CD4-positive, alpha-beta memory T cell (primary cell): ENCODE measurements at regions of chr7 and their contacts with region 1.

Region 1: DNA sequence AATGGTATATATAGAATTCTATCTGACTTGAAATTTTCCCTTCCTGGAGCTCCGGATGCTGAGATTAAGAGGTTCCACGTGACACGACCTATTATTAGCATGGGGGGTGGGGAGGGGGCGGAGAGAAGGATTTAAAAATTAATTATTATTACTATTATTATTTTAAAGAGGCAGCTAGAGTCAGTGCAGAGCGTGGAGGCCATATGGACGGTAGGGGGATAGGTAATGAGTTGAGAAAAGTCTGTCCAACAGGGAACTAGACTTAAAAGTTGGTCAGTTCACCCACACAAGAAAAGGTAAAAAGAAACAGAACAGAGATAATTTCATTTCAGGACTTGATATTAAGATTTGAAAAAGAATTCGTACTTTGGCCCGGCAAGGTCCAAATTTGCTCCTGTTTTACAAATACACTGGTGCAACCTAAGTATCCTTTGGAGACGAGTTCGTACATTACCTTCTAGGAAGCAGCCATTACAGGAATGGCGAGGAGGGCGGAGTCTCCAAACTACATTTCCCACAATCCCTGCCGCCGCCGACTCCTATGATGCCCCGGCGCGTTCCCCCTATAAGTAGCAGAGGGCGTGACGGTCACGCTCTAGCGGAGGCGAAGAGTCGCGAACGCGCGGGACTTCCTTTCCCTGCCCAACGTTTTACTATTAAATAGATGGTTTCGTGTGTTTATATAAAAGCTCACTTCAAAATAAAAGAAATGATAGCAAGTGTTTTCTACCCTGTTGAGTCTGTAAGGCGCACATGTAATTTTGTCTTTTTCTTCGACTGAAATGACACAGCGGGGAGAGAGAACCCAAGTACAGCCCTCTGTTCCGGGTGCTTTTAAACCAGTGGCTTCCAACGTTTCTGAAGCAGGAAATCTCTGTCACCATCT is at the start of gene SMIM30:
- DNase-seq: peak; percentile 85 to 89 (median 87)
- H3K4me3 ChIP-seq: peak within 1 kb of the TSS; percentile 65 to 70
- H3K4me3 Mint-ChIP-seq: peak within 1 kb of the TSS; percentile 94 to 99 (median 96)
- H3K27ac ChIP-seq: peak within 1 kb of the TSS; percentile 70
- H3K27ac Mint-ChIP-seq: peak within 1 kb of the TSS; percentile 84 to 99 (median 98)
- H3K4me1 ChIP-seq: peaks cover 13% of the 10 kb centered on the region
- H3K4me1 Mint-ChIP-seq: peaks cover 11 to 24% (median 14%) of the 10 kb centered on the region in 4 donors
- H3K27me3 ChIP-seq: no peaks in the 10 kb centered on the region
- H3K27me3 Mint-ChIP-seq: no peaks in the 10 kb centered on the region
- total RNA-seq, gene SMIM30: 21.6 to 21.8 TPM

Region 2: DNA sequence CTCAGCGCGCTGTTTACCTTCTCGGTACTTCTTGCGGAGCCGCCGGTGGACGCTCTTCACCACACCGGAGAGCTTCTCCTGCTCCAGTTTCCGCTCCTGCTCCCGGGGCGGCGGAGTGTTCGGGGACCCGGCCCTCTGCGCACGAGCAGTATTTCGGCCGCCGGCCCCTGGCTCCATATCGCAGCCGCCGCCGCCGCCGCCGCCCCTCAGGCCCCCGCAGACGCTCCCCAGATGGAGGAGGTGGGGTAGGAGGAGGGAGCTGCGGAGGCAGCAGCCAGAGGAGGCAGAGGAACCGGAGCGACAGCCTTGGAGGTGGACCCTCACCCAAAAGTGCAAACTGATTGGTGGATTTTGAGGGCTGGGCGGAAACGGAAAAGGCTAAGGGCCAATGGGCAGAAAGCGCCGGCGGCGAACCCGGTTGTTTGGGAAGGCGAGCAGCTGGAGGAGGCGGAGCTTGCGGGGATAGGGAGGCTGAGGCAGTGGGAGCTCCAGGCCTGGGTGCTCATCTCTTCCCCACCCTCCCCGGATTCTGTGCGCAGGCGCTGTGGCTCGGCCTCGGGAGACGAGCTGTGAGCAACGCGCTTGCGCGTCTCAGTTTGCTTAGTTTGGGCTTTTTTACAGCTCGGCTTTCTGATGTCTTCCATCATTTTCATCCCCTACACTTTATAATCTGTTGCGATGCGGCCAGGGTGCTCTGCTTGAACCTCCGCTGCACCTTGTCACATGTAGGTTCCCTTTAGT is 178.6 kb before region 1 on chr7:
- CTCF ChIA-PET with region 1: interaction called, 4 read pairs
- POLR2A ChIA-PET with region 1: interaction called, 9 read pairs
- intact Hi-C with region 1: loop called (anchors 1 kb)
- DNase-seq: peak; percentile 99 to 100 (median 99)
- H3K4me3 ChIP-seq: peak overlapping the region; percentile 71 to 72
- H3K4me3 Mint-ChIP-seq: peak overlapping the region; percentile 92 to 99 (median 96)
- H3K27ac ChIP-seq: peak overlapping the region; percentile 71
- H3K27ac Mint-ChIP-seq: peak overlapping the region; percentile 90 to 99 (median 97)
- H3K4me1 ChIP-seq: peaks cover 40% of the 10 kb centered on the region
- H3K4me1 Mint-ChIP-seq: peaks cover 31 to 59% (median 43%) of the 10 kb centered on the region in 4 donors
- H3K27me3 ChIP-seq: no peaks in the 10 kb centered on the region
- H3K27me3 Mint-ChIP-seq: peaks cover 0 to 4% of the 10 kb centered on the region in 2 donors

Region 3: DNA sequence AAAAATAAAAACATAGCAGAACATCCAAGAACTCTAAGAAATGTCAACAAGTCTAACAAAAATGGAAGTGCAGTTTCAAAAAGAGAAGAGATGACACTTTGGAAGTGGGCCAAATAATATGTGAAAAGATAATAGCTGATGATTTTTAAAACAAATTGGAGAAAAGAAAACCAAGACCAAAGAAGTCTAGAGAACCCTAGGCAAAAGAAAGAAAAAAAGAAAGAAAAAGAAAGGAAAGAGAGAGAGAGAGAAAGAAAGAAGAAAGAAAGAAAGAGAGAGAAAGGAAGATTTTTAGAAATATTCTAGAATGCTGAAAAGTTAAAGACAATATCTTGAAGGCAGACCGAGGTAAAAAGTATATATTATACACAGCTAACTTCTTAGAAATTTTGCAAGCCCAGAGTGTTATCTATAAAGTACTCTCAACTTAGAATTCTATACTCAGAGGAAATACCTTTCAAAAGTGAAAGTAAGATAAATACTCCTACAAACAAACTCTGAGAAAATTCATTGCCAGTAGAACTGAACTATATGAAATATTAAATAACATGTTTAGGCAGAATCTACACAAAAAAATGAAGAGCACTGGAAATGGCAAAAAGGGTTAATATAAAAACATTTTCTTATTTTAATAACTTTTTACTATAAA is 138.7 kb after region 1 on chr7:
- CTCF ChIA-PET with region 1: no interaction called
- POLR2A ChIA-PET with region 1: no interaction called
- intact Hi-C with region 1: no loop called
- DNase-seq: no peak
- H3K4me3 ChIP-seq: no peak overlapping the region
- H3K4me3 Mint-ChIP-seq: peak overlapping the region in 1 of 8 donors; percentile 35
- H3K27ac ChIP-seq: no peak overlapping the region
- H3K27ac Mint-ChIP-seq: peak overlapping the region in 1 of 7 donors; percentile 25
- H3K4me1 ChIP-seq: no peaks in the 10 kb centered on the region
- H3K4me1 Mint-ChIP-seq: no peaks in the 10 kb centered on the region
- H3K27me3 ChIP-seq: no peaks in the 10 kb centered on the region
- H3K27me3 Mint-ChIP-seq: no peaks in the 10 kb centered on the region